Aorta (tissue), 5 donors: ENCODE measurements at regions of chr4 and their contacts with region 1.

Region 1: GRCh38 chr4:46844325-46844917 is 64.6 kb downstream of the COX7B2 start:
- DNase-seq: no peak
- ATAC-seq: no peak
- H3K4me3 ChIP-seq: no peak overlapping the region
- H3K27ac ChIP-seq: no peak overlapping the region
- H3K4me1 ChIP-seq: no peaks in the 10 kb centered on the region
- H3K27me3 ChIP-seq: no peaks in the 10 kb centered on the region

Region 2: DNA sequence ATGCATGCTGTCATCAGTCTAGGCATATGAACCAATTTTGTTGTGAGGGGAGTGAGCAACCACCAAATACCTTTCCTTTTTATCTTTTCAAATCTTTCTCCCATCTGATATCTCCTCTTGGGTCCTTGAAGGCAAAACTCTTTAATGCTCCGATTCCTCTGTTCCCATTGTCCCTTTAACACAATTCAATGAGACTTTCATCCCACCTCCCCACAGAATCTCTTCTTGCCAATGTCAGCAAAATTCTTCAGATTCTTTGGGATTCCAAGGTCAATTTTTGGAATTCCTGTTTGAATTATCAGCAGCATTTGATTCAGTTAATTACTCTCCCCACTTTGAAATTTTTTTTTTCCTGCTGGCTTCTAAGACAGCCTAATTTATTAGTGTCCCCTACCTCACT is 168.1 kb before region 1 on chr4:
- intact Hi-C with region 1: no loop called
- DNase-seq: no peak
- ATAC-seq: no peak
- H3K4me3 ChIP-seq: no peak overlapping the region
- H3K27ac ChIP-seq: no peak overlapping the region
- H3K4me1 ChIP-seq: no peaks in the 10 kb centered on the region
- H3K27me3 ChIP-seq: no peaks in the 10 kb centered on the region

Region 3: DNA sequence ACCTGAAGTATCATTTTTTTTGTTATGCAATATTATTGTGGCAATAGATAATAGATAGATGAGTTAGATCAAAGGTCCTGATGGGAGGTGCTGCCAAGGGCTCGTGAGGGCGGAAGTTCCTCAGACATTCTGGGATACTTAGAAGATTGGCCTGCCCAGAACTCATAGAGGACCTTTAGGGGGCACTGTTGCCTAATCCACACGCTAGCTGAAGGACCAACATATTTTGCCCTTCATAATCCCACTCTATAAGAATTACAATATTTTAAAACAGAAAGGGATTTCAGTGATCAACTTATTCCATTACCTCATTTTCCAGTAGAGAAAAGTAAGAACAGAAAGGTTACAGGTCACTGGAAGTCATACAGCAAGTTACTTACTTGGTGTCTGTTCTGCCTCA is 87.6 kb after region 1 on chr4:
- intact Hi-C with region 1: no loop called
- DNase-seq: peak in 1 of 2 donors; percentile 38
- ATAC-seq: peak; percentile 46
- H3K4me3 ChIP-seq: no peak overlapping the region
- H3K27ac ChIP-seq: no peak overlapping the region
- H3K4me1 ChIP-seq: no peaks in the 10 kb centered on the region
- H3K27me3 ChIP-seq: no peaks in the 10 kb centered on the region

Region 4: DNA sequence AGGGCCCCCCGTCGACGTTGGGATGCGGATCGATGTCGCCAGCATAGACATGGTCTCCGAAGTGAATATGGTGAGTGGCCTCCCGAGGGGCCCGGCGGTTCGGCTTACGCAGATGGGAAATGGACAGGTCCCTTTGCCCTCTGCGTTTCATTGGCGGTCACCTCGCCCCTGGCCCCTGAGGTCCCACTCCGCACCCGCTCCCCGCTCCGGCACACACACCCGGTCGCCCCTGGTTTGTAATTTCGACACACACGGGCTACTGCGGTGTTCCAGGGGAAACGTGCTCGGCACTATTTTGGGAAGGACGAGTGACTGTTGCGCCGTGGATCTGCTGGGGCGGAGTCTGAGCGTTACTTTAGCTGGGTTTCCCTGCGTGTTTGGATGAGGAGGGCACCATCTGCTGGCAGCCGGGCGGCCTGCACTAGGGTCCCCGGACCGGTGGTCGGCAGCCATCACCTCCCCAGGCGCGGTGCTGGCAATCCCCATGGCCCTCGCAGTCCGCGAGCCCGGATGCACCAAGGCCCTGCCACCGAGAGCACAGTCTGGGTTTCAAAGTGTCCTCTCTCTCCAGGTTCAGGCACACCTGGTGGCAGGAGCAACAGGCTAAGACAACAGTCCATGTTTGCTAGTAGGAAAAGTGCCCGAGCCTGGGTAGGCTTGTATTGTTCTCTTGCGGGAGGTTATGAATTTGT is 188.1 kb after region 1 on chr4:
- intact Hi-C with region 1: loop called (anchors 10 kb)
- DNase-seq: peak in 1 of 2 donors; percentile 82
- ATAC-seq: peak; percentile 71
- H3K4me3 ChIP-seq: no peak overlapping the region
- H3K27ac ChIP-seq: no peak overlapping the region
- H3K4me1 ChIP-seq: no peaks in the 10 kb centered on the region
- H3K27me3 ChIP-seq: no peaks in the 10 kb centered on the region

Region 5: GRCh38 chr4:47122592-47123291 is 278.3 kb after region 1 on chr4:
- intact Hi-C with region 1: loop called (anchors 10 kb)
- DNase-seq: peak in 1 of 2 donors; percentile 47
- ATAC-seq: peak; percentile 46
- H3K4me3 ChIP-seq: no peak overlapping the region
- H3K27ac ChIP-seq: no peak overlapping the region
- H3K4me1 ChIP-seq: no peaks in the 10 kb centered on the region
- H3K27me3 ChIP-seq: no peaks in the 10 kb centered on the region

Region 6: GRCh38 chr4:47383829-47384427 is 539.5 kb after region 1 on chr4:
- intact Hi-C with region 1: loop called (anchors 10 kb)
- DNase-seq: no peak
- ATAC-seq: no peak
- H3K4me3 ChIP-seq: no peak overlapping the region
- H3K27ac ChIP-seq: no peak overlapping the region
- H3K4me1 ChIP-seq: no peaks in the 10 kb centered on the region
- H3K27me3 ChIP-seq: no peaks in the 10 kb centered on the region